ENCODE measurements at regions of chr1 and their contacts with region 1.

Region 1: GRCh38 chr1:147172168-147172992 is at the start of gene PRKAB2:
- DNase-seq: peak; percentile 96
- H3K4me3 ChIP-seq: peak within 1 kb of the TSS; percentile 74 to 91
- H3K27ac ChIP-seq: peak within 1 kb of the TSS; percentile 87 to 93
- H3K4me1 ChIP-seq: no peaks in the 10 kb centered on the region
- H3K27me3 ChIP-seq: no peaks in the 10 kb centered on the region
- CTCF ChIP-seq: peak; percentile 81 to 98 (median 93)
- POLR2A ChIP-seq: peak; percentile 56
- total RNA-seq, gene PRKAB2: 12.3 to 14.0 TPM

Region 2: DNA sequence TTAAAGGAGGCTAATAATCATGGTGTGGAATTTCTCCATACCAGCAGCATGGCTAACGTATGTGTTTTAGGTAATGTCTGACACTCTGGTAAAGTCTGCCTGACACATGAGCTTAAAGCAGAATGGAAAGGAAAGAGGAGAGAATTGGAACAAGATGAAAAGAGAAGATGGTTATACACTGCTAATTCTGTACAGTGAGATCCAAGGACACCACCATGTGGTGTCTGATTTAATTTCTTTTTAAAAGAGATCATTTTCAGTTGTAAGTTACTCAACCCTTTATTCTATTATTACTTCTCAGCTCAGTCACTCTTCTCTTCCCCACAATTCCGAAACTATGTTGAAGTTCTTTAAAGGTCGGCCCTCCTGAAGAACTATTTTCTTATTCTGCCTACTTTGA is 15.7 kb before region 1 on chr1:
- intact Hi-C with region 1: no loop called
- DNase-seq: no peak
- H3K4me3 ChIP-seq: no peak overlapping the region
- H3K27ac ChIP-seq: no peak overlapping the region
- H3K4me1 ChIP-seq: no peaks in the 10 kb centered on the region
- H3K27me3 ChIP-seq: no peaks in the 10 kb centered on the region
- CTCF ChIP-seq: no peak
- POLR2A ChIP-seq: no peak

Region 3: DNA sequence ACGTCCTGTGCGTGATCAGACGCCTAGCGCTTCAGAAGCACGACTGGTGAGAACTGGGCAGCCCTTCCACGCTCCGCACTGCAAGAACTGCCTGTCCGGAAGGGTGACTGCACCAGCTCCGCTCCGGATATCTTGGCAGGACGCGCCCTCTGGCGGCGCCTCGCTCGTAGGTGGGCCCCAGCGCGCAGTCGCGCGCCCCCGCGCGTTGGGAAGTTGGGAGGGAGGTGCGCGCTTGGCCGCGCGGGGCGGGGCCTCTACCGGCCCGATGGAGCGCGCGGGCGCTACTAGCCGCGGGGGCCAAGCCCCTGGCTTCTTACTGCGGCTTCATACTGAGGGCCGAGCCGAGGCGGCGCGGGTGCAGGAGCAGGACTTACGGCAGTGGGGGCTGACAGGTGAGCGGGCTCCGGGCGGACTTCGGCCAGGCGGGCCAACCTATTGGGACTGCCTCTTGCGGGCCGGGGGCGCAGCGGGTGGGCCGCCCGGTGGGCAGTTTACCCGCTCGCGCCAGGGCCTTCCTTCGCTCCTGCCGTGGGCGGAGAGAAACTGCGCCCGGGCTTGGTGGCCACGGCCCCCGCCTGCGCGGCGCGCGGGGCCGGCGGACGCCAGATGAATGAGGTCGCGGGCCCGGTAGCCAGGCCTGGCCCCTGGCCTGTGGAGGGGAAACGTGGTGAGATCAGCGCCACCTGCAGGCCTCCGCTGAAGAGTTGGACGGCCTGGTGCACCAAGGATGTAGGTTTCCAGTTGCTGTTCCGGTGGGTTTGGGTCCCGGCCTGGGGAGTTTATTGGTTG is 70.3 kb after region 1 on chr1 and contains the start of gene CHD1L:
- intact Hi-C with region 1: loop called (anchors 1 kb)
- DNase-seq: peak; percentile 96
- H3K4me3 ChIP-seq: peak within 1 kb of the TSS; percentile 82 to 83
- H3K27ac ChIP-seq: peak within 1 kb of the TSS; percentile 88
- H3K4me1 ChIP-seq: peaks cover 4% of the 10 kb centered on the region
- H3K27me3 ChIP-seq: no peaks in the 10 kb centered on the region
- CTCF ChIP-seq: peak; percentile 86 to 99 (median 94)
- POLR2A ChIP-seq: peak; percentile 36
- total RNA-seq, gene CHD1L: 21.4 to 22.0 TPM